ENCODE measurements at regions of chr12 and their contacts with region 1.

Region 1: DNA sequence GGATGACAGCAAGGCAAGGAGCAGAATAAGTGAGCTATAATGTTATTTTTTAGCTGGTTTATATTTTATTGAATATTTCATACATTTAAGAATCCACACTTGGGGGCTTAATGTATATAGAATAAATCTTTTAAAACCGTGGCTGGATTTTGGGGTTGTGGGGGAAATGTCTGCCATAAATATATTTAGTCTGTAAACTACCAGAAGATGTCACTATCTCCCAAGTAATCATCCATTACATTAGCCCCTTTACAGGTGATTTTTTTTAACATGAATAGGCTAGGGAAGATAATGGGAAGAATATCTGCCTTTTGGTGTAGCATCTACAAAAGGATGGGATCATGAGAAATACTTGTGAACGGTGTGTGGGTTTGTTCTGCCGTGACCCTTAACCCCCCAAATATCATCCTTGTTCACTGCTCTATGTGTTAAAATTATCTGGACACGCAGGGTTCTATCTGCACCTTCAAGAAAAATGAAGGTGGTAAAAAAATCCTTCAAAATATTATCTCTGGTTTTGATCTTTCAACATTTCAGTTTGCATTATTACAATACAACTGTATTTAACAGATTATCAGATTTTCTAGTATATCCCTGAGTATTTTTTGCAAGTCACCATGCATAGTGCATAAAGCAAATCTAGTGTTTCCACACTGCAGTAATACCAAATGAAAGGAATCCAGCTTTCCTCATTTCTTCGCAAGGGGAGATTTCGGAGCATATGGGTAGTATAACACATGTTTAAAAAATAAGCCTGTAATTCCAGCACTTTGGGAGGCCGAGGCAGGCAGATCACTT is 8.0 kb upstream of the SLC17A8 start:
- DNase-seq: peak; percentile 10
- H3K4me3 ChIP-seq: no peak overlapping the region
- H3K27ac ChIP-seq: no peak overlapping the region
- H3K4me1 ChIP-seq: no peaks in the 10 kb centered on the region
- H3K27me3 ChIP-seq: no peaks in the 10 kb centered on the region
- CTCF ChIP-seq: peak; percentile 38 to 48

Region 2: DNA sequence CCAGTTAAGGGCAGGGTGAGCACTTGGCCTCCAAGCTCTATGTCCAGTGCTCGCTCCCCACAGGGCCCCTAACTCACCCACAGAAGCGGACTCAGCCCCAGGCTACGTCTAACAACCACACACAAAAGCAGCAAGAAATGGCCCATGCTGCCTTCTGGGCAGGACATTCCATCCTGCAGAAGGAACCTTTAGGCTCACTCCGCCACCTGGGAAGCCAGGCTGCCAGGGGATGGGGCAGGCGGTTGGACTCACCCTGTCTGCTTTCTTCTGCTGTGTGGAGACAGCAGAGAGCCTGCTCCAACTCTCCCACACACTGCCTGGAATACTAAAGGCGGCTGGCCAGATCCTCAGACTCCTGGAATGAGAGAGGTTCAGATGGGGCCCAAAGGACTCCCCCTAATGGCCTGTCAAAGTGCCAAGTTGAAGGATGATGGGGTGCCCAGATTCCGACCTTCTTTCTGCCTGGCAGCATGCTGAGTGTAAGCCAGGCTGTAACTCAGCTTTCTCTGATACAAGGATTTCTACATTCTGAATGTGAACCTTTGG is 178.5 kb before region 1 on chr12:
- CTCF ChIA-PET with region 1: no interaction called
- dilution Hi-C with region 1: no loop called
- in situ Hi-C with region 1: no loop called
- intact Hi-C with region 1: no loop called
- DNase-seq: no peak
- H3K4me3 ChIP-seq: no peak overlapping the region
- H3K27ac ChIP-seq: no peak overlapping the region
- H3K4me1 ChIP-seq: no peaks in the 10 kb centered on the region
- H3K27me3 ChIP-seq: no peaks in the 10 kb centered on the region
- CTCF ChIP-seq: no peak

Region 3: GRCh38 chr12:100554608-100555077 is 205.8 kb after region 1 on chr12:
- CTCF ChIA-PET with region 1: no interaction called
- dilution Hi-C with region 1: no loop called
- in situ Hi-C with region 1: loop called (anchors 10 to 25 kb)
- intact Hi-C with region 1: loop called (anchors 1 kb)
- DNase-seq: peak; percentile 70
- H3K4me3 ChIP-seq: no peak overlapping the region
- H3K27ac ChIP-seq: no peak overlapping the region
- H3K4me1 ChIP-seq: no peaks in the 10 kb centered on the region
- H3K27me3 ChIP-seq: no peaks in the 10 kb centered on the region
- CTCF ChIP-seq: peak; percentile 82 to 94

Region 4: GRCh38 chr12:100668945-100669536 is 320.2 kb after region 1 on chr12:
- CTCF ChIA-PET with region 1: no interaction called
- dilution Hi-C with region 1: no loop called
- in situ Hi-C with region 1: loop called in 1 of 2 experiments (anchors 25 kb)
- intact Hi-C with region 1: loop called (anchors 2 kb)
- DNase-seq: peak; percentile 56
- H3K4me3 ChIP-seq: no peak overlapping the region
- H3K27ac ChIP-seq: no peak overlapping the region
- H3K4me1 ChIP-seq: no peaks in the 10 kb centered on the region
- H3K27me3 ChIP-seq: no peaks in the 10 kb centered on the region
- CTCF ChIP-seq: peak; percentile 82 to 96

Region 5: DNA sequence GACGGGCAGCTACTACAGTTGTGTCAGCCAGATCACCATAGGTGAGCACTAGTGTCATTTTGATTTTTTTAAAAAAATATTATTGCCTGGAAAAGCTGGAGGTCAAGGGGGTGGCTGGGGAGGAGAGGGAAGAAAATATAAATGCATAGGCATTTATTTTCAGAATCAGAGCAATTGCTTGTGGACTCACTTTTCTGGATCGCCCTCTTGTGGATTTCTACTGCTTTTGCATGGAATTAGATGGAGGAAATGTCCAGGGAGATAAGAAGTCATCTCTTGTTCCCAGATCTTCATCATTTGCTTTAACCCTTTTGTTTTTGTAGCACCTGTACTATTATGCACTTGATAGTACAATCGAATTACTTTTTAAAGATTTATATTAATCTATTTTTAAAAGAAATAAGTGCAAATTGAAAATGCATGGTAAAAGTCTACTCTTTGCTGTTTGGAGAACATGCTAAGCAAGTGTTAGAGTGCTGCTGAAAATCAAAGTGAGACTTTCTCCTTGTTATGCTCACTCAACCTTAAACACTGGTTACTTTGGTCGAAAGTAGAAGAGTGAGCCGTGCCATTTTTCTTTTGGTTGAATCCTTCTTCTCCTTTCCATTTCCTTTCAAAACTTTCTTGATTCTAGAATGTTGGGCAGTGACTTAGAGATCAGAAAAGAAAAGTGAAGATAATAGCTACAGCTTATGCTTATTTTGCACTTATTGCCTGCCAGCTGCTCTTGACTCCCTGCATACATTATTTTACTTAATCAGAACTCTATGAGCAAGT is 385.1 kb after region 1 on chr12:
- CTCF ChIA-PET with region 1: no interaction called
- dilution Hi-C with region 1: no loop called
- in situ Hi-C with region 1: loop called in 1 of 2 experiments (anchors 25 kb)
- intact Hi-C with region 1: no loop called
- DNase-seq: peak; percentile 24
- H3K4me3 ChIP-seq: no peak overlapping the region
- H3K27ac ChIP-seq: no peak overlapping the region
- H3K4me1 ChIP-seq: no peaks in the 10 kb centered on the region
- H3K27me3 ChIP-seq: no peaks in the 10 kb centered on the region
- CTCF ChIP-seq: peak; percentile 58 to 73

Region 6: GRCh38 chr12:100741084-100741711 is 392.3 kb after region 1 on chr12:
- CTCF ChIA-PET with region 1: no interaction called
- dilution Hi-C with region 1: no loop called
- in situ Hi-C with region 1: loop called in 1 of 2 experiments (anchors 25 kb)
- intact Hi-C with region 1: loop called (anchors 2 kb)
- DNase-seq: peak; percentile 26
- H3K4me3 ChIP-seq: no peak overlapping the region
- H3K27ac ChIP-seq: no peak overlapping the region
- H3K4me1 ChIP-seq: no peaks in the 10 kb centered on the region
- H3K27me3 ChIP-seq: no peaks in the 10 kb centered on the region
- CTCF ChIP-seq: peak; percentile 74 to 83

Region 7: GRCh38 chr12:100767950-100768349 is 419.1 kb after region 1 on chr12:
- CTCF ChIA-PET with region 1: no interaction called
- dilution Hi-C with region 1: no loop called
- in situ Hi-C with region 1: no loop called
- intact Hi-C with region 1: no loop called
- DNase-seq: no peak
- H3K4me3 ChIP-seq: no peak overlapping the region
- H3K27ac ChIP-seq: no peak overlapping the region
- H3K4me1 ChIP-seq: peaks cover 8% of the 10 kb centered on the region
- H3K27me3 ChIP-seq: no peaks in the 10 kb centered on the region
- CTCF ChIP-seq: no peak